Sciatic nerve (tissue), 2 donors: ENCODE measurements at regions of chr15 and their contacts with region 1.

Region 1: GRCh38 chr15:94943888-94944287 is 712.5 kb downstream of the MCTP2 start:
- DNase-seq: no peak
- ATAC-seq: peak; percentile 91

Region 2: GRCh38 chr15:94439158-94439557 is 504.7 kb before region 1 on chr15:
- intact Hi-C with region 1: loop called (anchors 5 kb)
- DNase-seq: no peak
- ATAC-seq: no peak